Dorsolateral prefrontal cortex (tissue), 120 donors: ENCODE measurements at regions of chr11 and their contacts with region 1.

Region 1: GRCh38 chr11:61639816-61640443 is 40.3 kb upstream of the DAGLA start:
- DNase-seq: no peak
- H3K4me3 ChIP-seq: no peak overlapping the region
- H3K27ac ChIP-seq: no peak overlapping the region
- H3K27me3 ChIP-seq: no peaks in the 10 kb centered on the region
- CTCF ChIP-seq: no peak

Region 2: GRCh38 chr11:61446211-61446651 is 193.7 kb before region 1 on chr11:
- intact Hi-C with region 1: loop called in 1 of 2 experiments (anchors 5 kb)
- DNase-seq: peak; percentile 71 to 98 (median 94)
- H3K4me3 ChIP-seq: peak overlapping the region in 1 of 59 donors; percentile 22
- H3K27ac ChIP-seq: peak overlapping the region in 57 of 59 donors; percentile 53 to 98 (median 86)
- H3K27me3 ChIP-seq: no peaks in the 10 kb centered on the region
- CTCF ChIP-seq: peak; percentile 65 to 96 (median 90)

Region 3: GRCh38 chr11:61477727-61478148 is 162.2 kb before region 1 on chr11:
- intact Hi-C with region 1: loop called (anchors 5 to 10 kb)
- DNase-seq: peak in 7 of 10 donors; percentile 30 to 75 (median 50)
- H3K4me3 ChIP-seq: peak overlapping the region in 6 of 59 donors; percentile 1 to 28 (median 10)
- H3K27ac ChIP-seq: peak overlapping the region in 13 of 59 donors; percentile 1 to 73 (median 28)
- H3K27me3 ChIP-seq: no peaks in the 10 kb centered on the region
- CTCF ChIP-seq: peak; percentile 82 to 98 (median 94)

Region 4: GRCh38 chr11:61516675-61517572 is 123.0 kb before region 1 on chr11:
- intact Hi-C with region 1: loop called in 1 of 2 experiments (anchors 5 kb)
- DNase-seq: peak in 4 of 10 donors; percentile 28 to 73 (median 50)
- H3K4me3 ChIP-seq: peak overlapping the region in 9 of 59 donors; percentile 3 to 28 (median 20)
- H3K27ac ChIP-seq: peak overlapping the region in 42 of 59 donors; percentile 0 to 79 (median 45)
- H3K27me3 ChIP-seq: peaks cover 0 to 9% (median 0%) of the 10 kb centered on the region in 45 donors
- CTCF ChIP-seq: peak; percentile 86 to 99 (median 97)

Region 5: DNA sequence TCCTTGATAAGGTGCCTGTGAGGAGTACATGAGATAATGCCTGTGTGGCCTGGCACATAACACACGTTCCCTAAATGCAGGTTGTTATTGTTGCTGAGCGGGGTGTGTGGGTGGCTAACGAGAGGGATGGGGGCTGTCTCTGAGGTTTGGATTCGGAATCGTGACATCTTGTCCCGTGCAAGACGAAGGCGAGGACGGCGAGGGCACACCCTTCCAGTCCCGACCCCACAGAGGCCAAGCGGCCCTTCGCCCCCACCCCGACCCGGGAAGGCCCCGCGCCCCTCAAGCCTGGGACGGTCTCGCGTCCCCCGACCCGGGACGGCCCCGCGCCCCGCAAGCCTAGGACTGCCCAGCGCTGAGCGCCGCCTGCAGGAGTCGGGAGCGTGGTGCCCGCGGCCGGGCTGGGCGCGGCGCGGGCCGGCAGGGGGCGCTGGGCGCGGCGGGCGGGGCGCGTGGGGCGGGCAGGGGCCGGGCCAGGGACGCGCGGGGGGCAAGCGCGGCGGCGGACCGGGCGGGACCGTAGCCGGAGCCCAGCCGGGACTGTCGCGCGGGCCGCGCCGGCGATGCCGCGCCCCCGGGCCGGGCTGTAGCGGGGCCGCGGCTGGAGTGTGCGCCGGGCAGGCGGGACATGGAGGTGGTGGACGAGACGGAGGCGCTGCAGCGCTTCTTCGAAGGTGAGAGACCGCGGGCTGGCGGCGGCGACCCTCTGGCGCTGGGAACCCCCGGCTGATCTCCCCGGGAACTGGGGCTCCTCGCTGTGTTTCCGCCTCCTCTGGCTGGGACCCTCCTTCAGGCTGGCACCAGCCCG is 112.4 kb after region 1 on chr11 and contains the start of gene MYRF:
- intact Hi-C with region 1: no loop called
- DNase-seq: peak in 6 of 10 donors; percentile 43 to 75 (median 55)
- H3K4me3 ChIP-seq: peak within 1 kb of the TSS; percentile 29 to 84 (median 71)
- H3K27ac ChIP-seq: peak within 1 kb of the TSS in 58 of 59 donors; percentile 80 to 99 (median 95)
- H3K27me3 ChIP-seq: peaks cover 0 to 2% (median 0%) of the 10 kb centered on the region in 45 donors
- CTCF ChIP-seq: peak in 49 of 56 donors; percentile 11 to 67 (median 43)
- total RNA-seq, gene MYRF: 23.0 to 708 (median 141) TPM

Region 6: GRCh38 chr11:61978703-61979661 is 339.1 kb after region 1 on chr11:
- intact Hi-C with region 1: no loop called
- DNase-seq: peak in 4 of 10 donors; percentile 17 to 36 (median 30)
- H3K4me3 ChIP-seq: no peak overlapping the region
- H3K27ac ChIP-seq: peak overlapping the region in 49 of 59 donors; percentile 3 to 80 (median 52)
- H3K27me3 ChIP-seq: no peaks in the 10 kb centered on the region
- CTCF ChIP-seq: no peak